Ascending aorta (tissue), 2 donors: ENCODE measurements at regions of chr12 and their contacts with region 1.

Region 1: GRCh38 chr12:131345521-131346436 is 365.1 kb upstream of the SFSWAP start:
- DNase-seq: no peak
- H3K4me3 ChIP-seq: no peak overlapping the region
- H3K27ac ChIP-seq: no peak overlapping the region
- H3K4me1 ChIP-seq: no peaks in the 10 kb centered on the region
- H3K27me3 ChIP-seq: no peaks in the 10 kb centered on the region
- CTCF ChIP-seq: no peak

Region 2: GRCh38 chr12:131621701-131622421 is 276.1 kb after region 1 on chr12:
- intact Hi-C with region 1: loop called (anchors 5 kb)
- DNase-seq: no peak
- H3K4me3 ChIP-seq: no peak overlapping the region
- H3K27ac ChIP-seq: no peak overlapping the region
- H3K4me1 ChIP-seq: peaks cover 0 to 3% of the 10 kb centered on the region in 2 donors
- H3K27me3 ChIP-seq: no peaks in the 10 kb centered on the region
- CTCF ChIP-seq: no peak

Region 3: GRCh38 chr12:131639270-131639940 is 293.6 kb after region 1 on chr12:
- intact Hi-C with region 1: no loop called
- DNase-seq: no peak
- H3K4me3 ChIP-seq: no peak overlapping the region
- H3K27ac ChIP-seq: no peak overlapping the region
- H3K4me1 ChIP-seq: no peaks in the 10 kb centered on the region
- H3K27me3 ChIP-seq: no peaks in the 10 kb centered on the region
- CTCF ChIP-seq: no peak